ENCODE measurements at regions of chr2 and their contacts with region 1.

Region 1: DNA sequence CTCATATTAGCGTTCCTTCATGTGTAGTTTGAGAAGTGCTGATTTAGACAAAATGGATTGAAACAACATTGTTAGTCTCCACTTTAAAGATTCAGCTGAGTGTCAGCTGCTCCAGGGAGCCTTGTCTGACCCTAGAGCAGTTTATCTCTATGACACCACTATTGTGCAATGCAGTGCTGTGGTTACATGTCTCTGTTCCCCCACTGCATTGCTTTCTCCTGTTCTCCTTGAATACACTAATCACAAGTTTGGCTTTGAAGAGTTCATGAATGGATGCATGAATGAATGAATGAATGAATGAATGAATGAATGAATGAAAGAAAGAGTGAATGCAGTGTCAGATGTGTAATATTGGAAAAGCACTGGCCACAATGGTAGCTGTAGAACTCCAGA is 38.3 kb downstream of the GCG start:
- DNase-seq: peak; percentile 76
- H3K4me3 ChIP-seq: no peak overlapping the region
- H3K27ac ChIP-seq: peak overlapping the region; percentile 25
- H3K4me1 ChIP-seq: peaks cover 30% of the 10 kb centered on the region
- H3K27me3 ChIP-seq: no peaks in the 10 kb centered on the region

Region 2: DNA sequence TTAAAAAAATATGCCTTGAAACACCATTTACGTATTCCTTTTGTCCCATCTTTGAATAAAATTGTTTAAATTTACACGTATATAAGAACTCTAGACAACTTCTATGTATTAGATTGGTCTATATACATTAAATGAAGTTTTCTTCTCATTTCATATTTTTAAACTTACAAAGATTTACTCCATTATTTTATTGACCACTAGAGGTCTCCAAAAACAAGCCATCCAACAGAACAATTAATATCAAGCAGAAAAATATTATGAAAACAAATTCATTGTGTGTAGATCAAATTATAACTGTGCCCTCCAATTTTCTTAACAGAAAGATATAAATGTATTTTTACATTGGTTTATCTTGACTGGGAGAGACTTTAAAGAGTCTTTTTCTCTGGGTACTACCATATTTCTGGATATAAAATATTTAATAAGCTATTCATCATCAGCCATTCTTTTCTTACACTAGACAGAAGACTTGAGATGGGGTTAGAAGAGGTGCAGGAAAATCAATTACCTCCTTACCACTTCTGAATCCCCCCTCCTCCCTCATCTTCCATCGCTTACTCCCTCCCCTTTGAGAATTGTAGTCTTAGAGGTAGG is 106.2 kb before region 1 on chr2:
- in situ Hi-C with region 1: loop called (anchors 10 kb)
- DNase-seq: peak; percentile 32
- H3K4me3 ChIP-seq: no peak overlapping the region
- H3K27ac ChIP-seq: no peak overlapping the region
- H3K4me1 ChIP-seq: no peaks in the 10 kb centered on the region; the same call in 1 of the 2 replicates
- H3K27me3 ChIP-seq: no peaks in the 10 kb centered on the region

Measured in GM23248 (cell line).